Caki2 (cell line): ENCODE measurements at regions of chr12 and their contacts with region 1.

Region 1: GRCh38 chr12:1553987-1554982 is 40.1 kb downstream of the FBXL14 start:
- DNase-seq: no peak

Region 2: DNA sequence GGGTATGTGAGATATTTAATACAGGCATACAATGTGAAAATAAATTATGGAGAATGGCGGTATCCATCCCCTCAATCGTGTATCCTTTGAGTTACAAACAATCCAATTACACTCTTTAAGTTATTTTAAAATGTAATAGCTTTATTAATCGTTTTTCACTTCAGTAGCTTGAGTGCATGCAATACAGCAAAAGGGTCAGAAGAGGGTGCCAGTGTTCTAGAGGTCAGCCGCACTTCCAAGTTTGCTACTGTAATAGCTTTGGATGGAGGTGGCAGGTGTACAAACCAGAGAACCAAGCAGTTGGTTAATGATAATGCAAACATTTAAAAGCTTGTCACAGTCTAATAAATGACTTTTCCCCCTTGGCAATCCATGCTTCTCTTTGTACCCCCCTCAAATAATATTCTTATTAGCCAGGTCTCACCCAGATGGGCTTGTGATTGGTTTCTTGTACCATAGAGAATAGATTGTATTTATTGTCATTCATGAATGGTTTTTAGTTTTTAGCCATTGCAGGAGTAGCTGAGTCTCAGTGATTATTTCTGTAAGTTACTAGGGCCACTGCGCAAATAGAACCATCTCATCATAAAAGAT is 436.2 kb before region 1 on chr12:
- in situ Hi-C with region 1: loop called (anchors 25 kb)
- DNase-seq: peak; percentile 48